Activated T-helper 1 cell treated with anti-CD3 and anti-CD28 coated beads, Interleukin-12 subunit alpha, Interleukin-12 subunit beta, Interleukin-2, Interleukin-4 antibody, amounts not matched to agents 30 ng/mL and 10 ng/mL and 1 ng/mL, durations not matched to agents 14 hours and 24 hours and 36 hours (primary cell): ENCODE measurements at regions of chr14 and their contacts with region 1.

Region 1: GRCh38 chr14:75258615-75259466 is 19.8 kb upstream of the FOS start:
- DNase-seq: peak; percentile 99
- H3K4me3 Mint-ChIP-seq: peak overlapping the region; percentile 85
- H3K27ac Mint-ChIP-seq: peak overlapping the region; percentile 100
- H3K4me1 Mint-ChIP-seq: peaks cover 23% of the 10 kb centered on the region
- H3K27me3 Mint-ChIP-seq: peaks cover 52% of the 10 kb centered on the region

Region 2: GRCh38 chr14:75278422-75279161 is 19.8 kb after region 1 on chr14 and contains the start of gene FOS:
- intact Hi-C with region 1: loop called (anchors 1 kb)
- DNase-seq: peak; percentile 87
- H3K4me3 Mint-ChIP-seq: peak within 1 kb of the TSS; percentile 90
- H3K27ac Mint-ChIP-seq: peak within 1 kb of the TSS; percentile 99
- H3K4me1 Mint-ChIP-seq: peaks cover 52% of the 10 kb centered on the region
- H3K27me3 Mint-ChIP-seq: peaks cover 55% of the 10 kb centered on the region
- total RNA-seq, gene FOS: 40.9 and 41.9 TPM in 2 replicates

Region 3: DNA sequence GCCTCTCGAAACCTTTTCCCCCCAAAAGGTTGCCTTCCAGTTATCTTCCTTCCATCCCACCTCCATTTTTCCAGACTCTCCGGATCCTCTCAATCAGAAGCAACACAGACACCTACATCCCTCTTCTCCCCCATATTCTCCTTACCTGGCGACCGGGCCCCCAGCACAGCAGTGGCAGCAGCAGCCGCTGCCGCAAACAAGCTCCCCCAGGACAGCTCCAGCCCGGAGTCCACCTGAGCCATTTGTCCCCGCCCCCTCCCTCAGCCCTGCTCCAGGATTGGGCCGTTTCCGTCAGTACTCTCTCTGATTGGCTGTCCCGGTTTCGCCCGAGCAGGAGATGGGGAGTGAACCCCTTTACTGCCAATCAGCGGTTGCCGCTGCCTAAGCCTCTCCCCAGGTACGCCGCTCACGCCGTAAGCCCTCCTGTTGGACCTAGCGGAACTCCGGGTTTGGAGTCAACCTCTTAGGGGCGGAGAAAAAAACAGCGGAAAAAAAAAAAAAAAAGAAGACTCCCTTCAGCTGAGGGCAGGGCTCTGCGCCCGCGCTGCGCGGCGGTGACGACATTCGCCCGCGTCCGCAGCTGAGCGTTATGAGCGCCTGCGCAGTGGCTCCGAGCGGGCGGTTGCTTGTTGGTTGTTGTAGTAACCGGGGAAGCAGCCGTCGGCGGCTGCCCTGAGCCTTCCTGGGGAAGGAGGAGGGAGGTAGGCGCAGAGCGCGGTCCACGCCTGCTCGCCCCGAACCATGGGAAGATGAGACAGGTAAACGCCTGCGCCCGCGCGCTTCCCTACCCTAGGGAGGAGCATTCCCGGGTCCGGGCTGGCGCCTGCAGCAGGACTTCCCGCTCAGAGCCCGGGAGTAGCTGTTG is 402.0 kb after region 1 on chr14 and contains the starts of genes ERG28 and TTLL5:
- intact Hi-C with region 1: loop called (anchors 2 kb)
- DNase-seq: peak; percentile 97
- H3K4me3 Mint-ChIP-seq: peak within 1 kb of the TSS; percentile 100
- H3K27ac Mint-ChIP-seq: peak within 1 kb of the TSS; percentile 94
- H3K4me1 Mint-ChIP-seq: peaks cover 38% of the 10 kb centered on the region
- H3K27me3 Mint-ChIP-seq: no peaks in the 10 kb centered on the region
- total RNA-seq, gene ERG28: 17.5 and 17.8 TPM in 2 replicates
- total RNA-seq, gene TTLL5: 36.2 and 39.0 TPM in 2 replicates